Natural killer cell (primary cell): ENCODE measurements at regions of chr17 and their contacts with region 1.

Region 1: DNA sequence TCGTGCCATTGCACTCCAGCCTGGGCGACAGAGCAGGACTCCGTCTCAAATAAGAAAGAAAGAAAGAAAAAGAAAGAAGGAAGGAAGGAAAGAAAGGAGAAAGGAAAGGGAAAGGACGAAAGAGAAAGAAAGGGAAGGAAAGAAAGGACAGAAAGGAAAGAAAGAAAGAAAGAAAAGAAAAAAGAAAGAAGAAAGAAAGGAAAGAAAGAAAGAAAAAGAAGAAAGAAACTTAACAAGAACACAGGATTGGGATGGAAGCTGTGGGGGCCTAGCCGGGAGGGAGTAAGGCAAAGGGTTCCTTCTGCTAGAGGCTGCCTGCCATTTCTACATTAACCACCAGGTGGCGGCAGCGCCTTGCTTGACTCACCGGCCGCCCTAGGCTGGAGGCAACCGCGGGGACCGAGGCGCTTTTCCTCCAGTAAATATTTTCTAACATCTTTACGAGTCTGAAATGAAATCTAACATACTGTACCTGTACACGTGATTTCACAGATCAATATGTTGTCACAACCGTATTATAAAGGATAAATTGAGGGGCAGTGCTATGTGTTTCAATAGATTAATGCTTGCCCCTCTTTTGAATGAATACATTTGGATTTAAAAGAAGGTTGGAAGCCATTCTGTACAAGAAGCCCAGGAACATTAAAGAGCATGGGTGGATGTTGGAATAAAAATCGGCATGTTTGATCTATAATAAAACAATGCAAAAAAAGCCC is 6.1 kb downstream of the GJD3 start:
- DNase-seq: peak; percentile 86 to 94
- ATAC-seq: peak; percentile 64 to 78 (median 75)
- H3K4me3 ChIP-seq: no peak overlapping the region
- H3K4me3 Mint-ChIP-seq: no peak overlapping the region
- H3K27ac ChIP-seq: no peak overlapping the region
- H3K27ac Mint-ChIP-seq: no peak overlapping the region
- H3K4me1 ChIP-seq: peaks cover 22% of the 10 kb centered on the region
- H3K4me1 Mint-ChIP-seq: peaks cover 9 to 31% of the 10 kb centered on the region in 2 donors
- H3K27me3 ChIP-seq: peaks cover 5% of the 10 kb centered on the region
- H3K27me3 Mint-ChIP-seq: peaks cover 7 to 18% of the 10 kb centered on the region in 2 donors
- CTCF ChIP-seq: peak; percentile 95

Region 2: GRCh38 chr17:39704821-39705551 is 653.5 kb before region 1 on chr17:
- intact Hi-C with region 1: no loop called
- DNase-seq: no peak
- ATAC-seq: no peak
- H3K4me3 ChIP-seq: no peak overlapping the region
- H3K4me3 Mint-ChIP-seq: peak overlapping the region; percentile 31
- H3K27ac ChIP-seq: no peak overlapping the region
- H3K27ac Mint-ChIP-seq: peak overlapping the region; percentile 45 to 75
- H3K4me1 ChIP-seq: peaks cover 61% of the 10 kb centered on the region
- H3K4me1 Mint-ChIP-seq: peaks cover 53 to 79% of the 10 kb centered on the region in 2 donors
- H3K27me3 ChIP-seq: peaks cover 6% of the 10 kb centered on the region
- H3K27me3 Mint-ChIP-seq: peaks cover 0 to 10% of the 10 kb centered on the region in 2 donors
- CTCF ChIP-seq: no peak

Region 3: GRCh38 chr17:40203131-40203530 is 155.3 kb before region 1 on chr17:
- intact Hi-C with region 1: loop called (anchors 2 kb)
- DNase-seq: no peak
- ATAC-seq: no peak
- H3K4me3 ChIP-seq: no peak overlapping the region
- H3K4me3 Mint-ChIP-seq: no peak overlapping the region
- H3K27ac ChIP-seq: no peak overlapping the region
- H3K27ac Mint-ChIP-seq: no peak overlapping the region
- H3K4me1 ChIP-seq: no peaks in the 10 kb centered on the region
- H3K4me1 Mint-ChIP-seq: no peaks in the 10 kb centered on the region
- H3K27me3 ChIP-seq: no peaks in the 10 kb centered on the region
- H3K27me3 Mint-ChIP-seq: peaks cover 0 to 6% of the 10 kb centered on the region in 2 donors
- CTCF ChIP-seq: no peak

Region 4: DNA sequence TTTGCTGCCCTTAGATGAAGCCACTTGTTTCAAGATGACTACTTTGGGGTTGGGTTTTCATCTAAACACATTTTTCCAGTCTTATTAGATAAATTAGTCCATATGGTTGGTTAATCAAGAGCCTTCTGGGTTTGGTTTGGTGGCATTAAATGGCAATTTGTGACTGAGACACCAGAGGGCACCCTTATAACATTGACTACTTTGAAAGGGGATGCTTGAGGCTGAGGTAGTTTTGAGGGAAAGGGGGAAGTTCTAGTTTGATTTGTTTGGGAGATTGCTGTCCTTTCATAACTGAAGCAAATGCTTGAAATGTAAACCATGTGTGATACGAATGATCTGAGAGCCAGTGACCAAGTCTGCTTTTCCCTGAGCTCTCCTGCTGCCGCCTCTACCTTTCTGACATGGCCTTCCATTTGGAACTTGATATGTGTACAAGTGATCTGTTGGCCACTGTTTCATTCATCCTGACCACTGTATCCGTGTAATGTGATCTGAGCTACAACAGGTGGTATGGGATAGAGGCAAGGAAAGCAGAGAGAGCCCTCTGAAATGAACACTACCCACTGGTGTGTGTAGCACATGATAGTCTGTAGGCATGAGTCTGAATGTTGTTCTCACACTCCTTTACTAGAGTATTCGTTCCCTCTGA is 55.3 kb before region 1 on chr17:
- intact Hi-C with region 1: loop called (anchors 1 kb)
- DNase-seq: peak in 1 of 2 donors; percentile 84
- ATAC-seq: peak; percentile 78 to 86 (median 84)
- H3K4me3 ChIP-seq: no peak overlapping the region
- H3K4me3 Mint-ChIP-seq: no peak overlapping the region
- H3K27ac ChIP-seq: no peak overlapping the region
- H3K27ac Mint-ChIP-seq: peak overlapping the region in 1 of 2 donors; percentile 39
- H3K4me1 ChIP-seq: peaks cover 18% of the 10 kb centered on the region
- H3K4me1 Mint-ChIP-seq: peaks cover 6 to 7% of the 10 kb centered on the region in 2 donors
- H3K27me3 ChIP-seq: no peaks in the 10 kb centered on the region
- H3K27me3 Mint-ChIP-seq: no peaks in the 10 kb centered on the region
- CTCF ChIP-seq: peak; percentile 81

Region 5: GRCh38 chr17:40417609-40418427 is 59.3 kb after region 1 on chr17 and contains the start of gene TOP2A:
- intact Hi-C with region 1: loop called (anchors 1 kb)
- DNase-seq: peak; percentile 97 to 99
- ATAC-seq: peak; percentile 99 to 100 (median 99)
- H3K4me3 ChIP-seq: peak within 1 kb of the TSS; percentile 71
- H3K4me3 Mint-ChIP-seq: peak within 1 kb of the TSS; percentile 96
- H3K27ac ChIP-seq: peak within 1 kb of the TSS; percentile 18
- H3K27ac Mint-ChIP-seq: peak within 1 kb of the TSS; percentile 75 to 78
- H3K4me1 ChIP-seq: peaks cover 16% of the 10 kb centered on the region
- H3K4me1 Mint-ChIP-seq: peaks cover 10 to 14% of the 10 kb centered on the region in 2 donors
- H3K27me3 ChIP-seq: no peaks in the 10 kb centered on the region
- H3K27me3 Mint-ChIP-seq: no peaks in the 10 kb centered on the region
- CTCF ChIP-seq: no peak
- total RNA-seq, gene TOP2A: 2.0 to 6.4 (median 4.6) TPM